Naive thymus-derived CD4-positive, alpha-beta T cell (primary cell): ENCODE measurements at regions of chr6 and their contacts with region 1.

Region 1: DNA sequence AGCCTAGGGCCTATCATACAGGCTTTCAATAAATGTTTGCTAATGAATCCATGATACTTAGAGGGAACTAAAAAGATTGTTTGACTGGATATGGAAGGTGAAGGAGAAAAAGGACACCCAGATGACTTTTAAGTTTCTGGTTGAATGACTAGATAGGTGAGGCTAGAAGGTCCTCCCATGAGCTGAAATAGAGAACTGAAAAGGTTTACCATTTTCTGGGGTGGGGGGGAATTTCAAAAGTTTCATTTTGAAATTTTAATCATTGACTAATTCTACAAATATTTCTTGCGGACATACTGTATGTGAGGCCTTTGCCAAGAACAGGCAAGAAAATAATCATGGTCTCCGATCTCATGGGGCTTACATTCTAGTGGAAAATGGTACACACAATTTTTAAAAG is 17.9 kb upstream of the ZBTB2 start:
- DNase-seq: no peak
- ATAC-seq: no peak
- H3K4me3 ChIP-seq: no peak overlapping the region
- H3K4me3 Mint-ChIP-seq: no peak overlapping the region
- H3K27ac ChIP-seq: no peak overlapping the region
- H3K27ac Mint-ChIP-seq: peak overlapping the region in 7 of 9 donors; percentile 1 to 70 (median 37)
- H3K4me1 ChIP-seq: peaks cover 12 to 14% of the 10 kb centered on the region in 2 donors
- H3K4me1 Mint-ChIP-seq: peaks cover 20 to 38% (median 32%) of the 10 kb centered on the region in 7 donors
- H3K27me3 ChIP-seq: no peaks in the 10 kb centered on the region
- H3K27me3 Mint-ChIP-seq: no peaks in the 10 kb centered on the region

Region 2: GRCh38 chr6:151101161-151101820 is 308.0 kb before region 1 on chr6:
- CTCF ChIA-PET with region 1: no interaction called
- POLR2A ChIA-PET with region 1: no interaction called
- intact Hi-C with region 1: no loop called
- DNase-seq: no peak
- ATAC-seq: no peak
- H3K4me3 ChIP-seq: no peak overlapping the region
- H3K4me3 Mint-ChIP-seq: no peak overlapping the region
- H3K27ac ChIP-seq: no peak overlapping the region
- H3K27ac Mint-ChIP-seq: no peak overlapping the region
- H3K4me1 ChIP-seq: no peaks in the 10 kb centered on the region
- H3K4me1 Mint-ChIP-seq: peaks cover 0 to 6% (median 0%) of the 10 kb centered on the region in 7 donors
- H3K27me3 ChIP-seq: no peaks in the 10 kb centered on the region
- H3K27me3 Mint-ChIP-seq: no peaks in the 10 kb centered on the region

Region 3: GRCh38 chr6:151352410-151353396 is 56.6 kb before region 1 on chr6:
- CTCF ChIA-PET with region 1: no interaction called
- POLR2A ChIA-PET with region 1: no interaction called
- intact Hi-C with region 1: loop called in 1 of 2 experiments (anchors 2 kb)
- DNase-seq: no peak
- ATAC-seq: peak; percentile 40
- H3K4me3 ChIP-seq: no peak overlapping the region
- H3K4me3 Mint-ChIP-seq: no peak overlapping the region
- H3K27ac ChIP-seq: no peak overlapping the region
- H3K27ac Mint-ChIP-seq: no peak overlapping the region
- H3K4me1 ChIP-seq: no peaks in the 10 kb centered on the region
- H3K4me1 Mint-ChIP-seq: peaks cover 0 to 6% (median 2%) of the 10 kb centered on the region in 7 donors
- H3K27me3 ChIP-seq: no peaks in the 10 kb centered on the region
- H3K27me3 Mint-ChIP-seq: no peaks in the 10 kb centered on the region

Region 4: GRCh38 chr6:151440930-151441329 is 31.7 kb after region 1 on chr6:
- CTCF ChIA-PET with region 1: interaction called, 18 read pairs
- POLR2A ChIA-PET with region 1: no interaction called
- intact Hi-C with region 1: no loop called
- DNase-seq: peak in 7 of 9 donors; percentile 10 to 46 (median 33)
- ATAC-seq: peak; percentile 47
- H3K4me3 ChIP-seq: no peak overlapping the region
- H3K4me3 Mint-ChIP-seq: no peak overlapping the region
- H3K27ac ChIP-seq: no peak overlapping the region
- H3K27ac Mint-ChIP-seq: peak overlapping the region in 3 of 9 donors; percentile 2 to 23 (median 20)
- H3K4me1 ChIP-seq: peaks cover 6 to 8% of the 10 kb centered on the region in 2 donors
- H3K4me1 Mint-ChIP-seq: peaks cover 16 to 62% (median 47%) of the 10 kb centered on the region in 7 donors
- H3K27me3 ChIP-seq: no peaks in the 10 kb centered on the region
- H3K27me3 Mint-ChIP-seq: no peaks in the 10 kb centered on the region